Transverse colon (tissue), 4 donors: ENCODE measurements at regions of chr1 and their contacts with region 1.

Region 1: GRCh38 chr1:53393325-53393792 is 65.5 kb upstream of the LRP8 start:
- DNase-seq: peak; percentile 81
- H3K4me3 ChIP-seq: no peak overlapping the region
- H3K27ac ChIP-seq: no peak overlapping the region
- H3K4me1 ChIP-seq: no peaks in the 10 kb centered on the region
- H3K27me3 ChIP-seq: no peaks in the 10 kb centered on the region
- CTCF ChIP-seq: peak; percentile 89 to 94 (median 94)
- EP300 ChIP-seq: no peak
- POLR2A ChIP-seq: no peak

Region 2: DNA sequence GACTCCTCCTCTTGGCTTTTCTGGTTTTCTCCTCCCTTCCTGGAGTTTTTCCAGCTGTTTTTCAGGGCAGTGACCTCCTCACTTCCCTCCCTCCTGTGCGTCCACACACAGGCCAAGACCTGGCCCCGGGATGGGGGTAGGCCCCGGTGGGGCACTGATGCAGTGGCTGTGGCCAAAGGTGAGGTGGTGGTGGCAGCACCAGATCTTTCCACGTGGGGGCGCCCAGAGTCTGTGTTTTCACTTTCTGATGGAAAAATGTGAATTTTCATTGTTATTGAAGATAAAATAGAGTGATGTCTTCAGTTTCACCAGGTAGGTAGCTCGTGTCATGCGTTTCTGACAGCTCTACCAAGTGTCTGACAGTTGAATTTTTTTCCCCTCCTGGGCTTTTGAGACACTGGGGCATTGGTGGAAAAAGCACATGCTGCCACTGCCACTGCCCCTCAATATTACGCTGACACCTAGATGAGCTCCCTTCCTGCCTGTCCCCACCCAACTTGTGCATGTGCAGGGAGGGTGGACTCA is 115.1 kb before region 1 on chr1:
- in situ Hi-C with region 1: loop called (anchors 5 to 10 kb)
- intact Hi-C with region 1: loop called (anchors 2 kb)
- DNase-seq: peak; percentile 66
- H3K4me3 ChIP-seq: no peak overlapping the region
- H3K27ac ChIP-seq: no peak overlapping the region
- H3K4me1 ChIP-seq: no peaks in the 10 kb centered on the region
- H3K27me3 ChIP-seq: no peaks in the 10 kb centered on the region
- CTCF ChIP-seq: peak; percentile 89 to 97 (median 90)
- EP300 ChIP-seq: no peak
- POLR2A ChIP-seq: no peak

Region 3: GRCh38 chr1:53285969-53286760 is 107.2 kb before region 1 on chr1:
- in situ Hi-C with region 1: loop called in 1 of 4 experiments (anchors 10 kb)
- intact Hi-C with region 1: no loop called
- DNase-seq: no peak
- H3K4me3 ChIP-seq: no peak overlapping the region
- H3K27ac ChIP-seq: no peak overlapping the region
- H3K4me1 ChIP-seq: no peaks in the 10 kb centered on the region
- H3K27me3 ChIP-seq: no peaks in the 10 kb centered on the region
- CTCF ChIP-seq: no peak
- EP300 ChIP-seq: no peak
- POLR2A ChIP-seq: no peak

Region 4: GRCh38 chr1:53343831-53344668 is 49.3 kb before region 1 on chr1:
- in situ Hi-C with region 1: no loop called
- intact Hi-C with region 1: loop called (anchors 1 kb)
- DNase-seq: no peak
- H3K4me3 ChIP-seq: no peak overlapping the region
- H3K27ac ChIP-seq: no peak overlapping the region
- H3K4me1 ChIP-seq: no peaks in the 10 kb centered on the region
- H3K27me3 ChIP-seq: no peaks in the 10 kb centered on the region
- CTCF ChIP-seq: no peak
- EP300 ChIP-seq: no peak
- POLR2A ChIP-seq: no peak

Region 5: DNA sequence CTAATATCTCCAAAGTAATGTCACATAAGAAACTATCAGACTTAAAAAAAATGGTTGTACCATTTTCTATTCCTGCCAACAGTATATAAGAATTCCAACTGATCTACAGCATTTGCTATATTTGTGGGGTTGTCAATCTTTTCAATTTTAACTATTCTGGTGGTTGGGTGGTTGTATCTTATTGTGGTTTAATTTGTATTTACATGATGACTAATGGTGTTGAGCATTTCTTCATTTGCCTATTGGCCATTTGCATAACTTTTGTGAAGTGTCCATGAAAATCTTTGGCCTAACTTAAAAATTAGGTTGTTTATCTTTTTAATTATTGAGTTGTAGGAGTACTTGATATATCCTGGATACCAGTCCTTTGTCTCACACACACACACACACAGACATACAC is 39.2 kb before region 1 on chr1:
- in situ Hi-C with region 1: no loop called
- intact Hi-C with region 1: loop called (anchors 1 kb)
- DNase-seq: no peak
- H3K4me3 ChIP-seq: no peak overlapping the region
- H3K27ac ChIP-seq: no peak overlapping the region
- H3K4me1 ChIP-seq: no peaks in the 10 kb centered on the region
- H3K27me3 ChIP-seq: peaks cover 4% of the 10 kb centered on the region
- CTCF ChIP-seq: no peak
- EP300 ChIP-seq: no peak
- POLR2A ChIP-seq: no peak